Naive thymus-derived CD4-positive, alpha-beta T cell (primary cell): ENCODE measurements at regions of chr20 and their contacts with region 1.

Region 1: GRCh38 chr20:44310664-44311639 is at the start of gene FITM2:
- DNase-seq: peak; percentile 96 to 99 (median 98)
- ATAC-seq: peak; percentile 99
- H3K4me3 ChIP-seq: peak within 1 kb of the TSS; percentile 98
- H3K4me3 Mint-ChIP-seq: peak within 1 kb of the TSS; percentile 87 to 97 (median 95)
- H3K27ac ChIP-seq: peak within 1 kb of the TSS; percentile 82
- H3K27ac Mint-ChIP-seq: peak within 1 kb of the TSS; percentile 91 to 98 (median 93)
- H3K4me1 ChIP-seq: peaks cover 12 to 18% of the 10 kb centered on the region in 2 donors
- H3K4me1 Mint-ChIP-seq: peaks cover 15 to 35% (median 28%) of the 10 kb centered on the region in 7 donors
- H3K27me3 ChIP-seq: no peaks in the 10 kb centered on the region
- H3K27me3 Mint-ChIP-seq: peaks cover 0 to 8% (median 0%) of the 10 kb centered on the region in 5 donors
- total RNA-seq, gene FITM2: 3.1 to 7.9 (median 5.0) TPM

Region 2: GRCh38 chr20:43456809-43457639 is 853.9 kb before region 1 on chr20:
- CTCF ChIA-PET with region 1: no interaction called
- POLR2A ChIA-PET with region 1: no interaction called
- intact Hi-C with region 1: loop called in 1 of 2 experiments (anchors 5 kb)
- DNase-seq: peak in 7 of 9 donors; percentile 73 to 92 (median 91)
- ATAC-seq: peak; percentile 82
- H3K4me3 ChIP-seq: peak overlapping the region; percentile 86
- H3K4me3 Mint-ChIP-seq: peak overlapping the region; percentile 79 to 100 (median 94)
- H3K27ac ChIP-seq: peak overlapping the region; percentile 100
- H3K27ac Mint-ChIP-seq: peak overlapping the region; percentile 96 to 100 (median 99)
- H3K4me1 ChIP-seq: peaks cover 10 to 29% of the 10 kb centered on the region in 2 donors
- H3K4me1 Mint-ChIP-seq: peaks cover 24 to 42% (median 35%) of the 10 kb centered on the region in 7 donors
- H3K27me3 ChIP-seq: no peaks in the 10 kb centered on the region
- H3K27me3 Mint-ChIP-seq: peaks cover 0 to 14% (median 4%) of the 10 kb centered on the region in 5 donors

Region 3: DNA sequence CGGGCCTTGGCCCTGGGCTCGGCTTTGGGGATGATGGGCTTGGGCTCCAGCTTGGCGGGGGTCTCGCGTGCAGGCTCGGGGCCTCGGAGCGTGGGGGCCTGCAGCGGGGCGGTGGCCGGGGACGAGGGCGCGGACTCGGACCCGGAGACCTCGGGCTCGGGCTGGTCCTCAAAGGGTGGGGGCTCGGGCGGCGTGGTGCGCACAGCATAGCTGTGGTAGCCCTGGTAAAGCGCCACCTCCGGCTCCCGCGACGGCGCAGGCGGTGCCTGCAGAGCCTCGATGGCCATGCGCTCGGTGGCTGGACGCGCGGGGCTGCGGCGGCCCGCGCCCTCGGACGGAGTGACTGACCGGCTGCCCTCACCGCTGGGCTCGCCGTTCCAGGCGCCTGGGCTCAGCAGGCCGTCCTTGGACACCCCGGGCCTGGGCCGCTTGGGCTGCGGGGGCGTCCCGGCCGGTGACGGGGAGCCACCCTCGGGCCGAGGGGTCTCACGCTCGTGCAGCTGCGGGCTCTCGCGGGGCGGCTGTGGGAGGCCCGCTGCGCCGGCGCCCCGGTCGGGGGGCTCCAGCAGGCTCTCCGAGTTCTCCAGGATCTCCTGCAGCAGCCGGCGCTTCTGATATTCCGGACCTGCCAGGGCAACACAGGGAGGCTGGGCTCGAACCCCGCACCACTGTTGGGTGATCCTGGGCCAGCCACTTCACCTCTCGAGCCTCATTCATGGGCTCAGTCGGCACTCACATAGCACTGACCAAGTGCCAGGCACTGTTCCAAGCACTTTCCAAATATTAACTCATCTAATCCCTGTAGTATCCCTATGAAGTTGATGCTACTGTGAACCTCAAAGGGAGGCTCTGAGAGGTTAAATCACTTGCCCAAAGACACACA is 194.9 kb before region 1 on chr20:
- CTCF ChIA-PET with region 1: interaction called, 7 read pairs
- POLR2A ChIA-PET with region 1: no interaction called
- intact Hi-C with region 1: loop called (anchors 1 to 5 kb)
- DNase-seq: no peak
- ATAC-seq: no peak
- H3K4me3 ChIP-seq: no peak overlapping the region
- H3K4me3 Mint-ChIP-seq: peak overlapping the region in 1 of 10 donors; percentile 23
- H3K27ac ChIP-seq: no peak overlapping the region
- H3K27ac Mint-ChIP-seq: peak overlapping the region in 1 of 9 donors; percentile 49
- H3K4me1 ChIP-seq: no peaks in the 10 kb centered on the region
- H3K4me1 Mint-ChIP-seq: peaks cover 0 to 16% (median 5%) of the 10 kb centered on the region in 7 donors
- H3K27me3 ChIP-seq: no peaks in the 10 kb centered on the region
- H3K27me3 Mint-ChIP-seq: peaks cover 8 to 34% (median 20%) of the 10 kb centered on the region in 5 donors

Region 4: DNA sequence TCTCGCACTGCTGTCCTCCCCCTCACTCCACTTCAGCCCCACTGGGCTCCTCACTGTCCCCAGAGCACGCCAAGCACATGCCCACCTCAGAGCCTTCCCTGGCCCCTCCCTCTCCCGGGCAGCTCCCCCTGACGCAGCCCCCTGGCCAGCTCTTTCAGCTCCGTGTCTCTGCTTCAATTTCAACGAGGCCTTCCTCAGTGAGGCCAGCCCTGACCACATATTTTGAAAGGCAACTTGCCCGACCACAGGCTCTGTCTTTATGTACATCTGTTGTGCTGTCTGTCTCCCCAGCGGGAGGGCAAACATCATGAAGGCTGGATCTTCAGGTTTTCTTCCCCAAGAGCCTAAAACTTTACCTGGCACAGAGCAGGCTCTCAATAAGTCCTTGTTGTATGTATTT is 168.5 kb before region 1 on chr20:
- CTCF ChIA-PET with region 1: no interaction called
- POLR2A ChIA-PET with region 1: no interaction called
- intact Hi-C with region 1: no loop called
- DNase-seq: no peak
- ATAC-seq: no peak
- H3K4me3 ChIP-seq: no peak overlapping the region
- H3K4me3 Mint-ChIP-seq: no peak overlapping the region
- H3K27ac ChIP-seq: no peak overlapping the region
- H3K27ac Mint-ChIP-seq: no peak overlapping the region
- H3K4me1 ChIP-seq: no peaks in the 10 kb centered on the region
- H3K4me1 Mint-ChIP-seq: peaks cover 0 to 1% (median 0%) of the 10 kb centered on the region in 7 donors
- H3K27me3 ChIP-seq: no peaks in the 10 kb centered on the region
- H3K27me3 Mint-ChIP-seq: peaks cover 12 to 17% (median 13%) of the 10 kb centered on the region in 5 donors

Region 5: GRCh38 chr20:44388466-44389023 is 77.6 kb after region 1 on chr20:
- CTCF ChIA-PET with region 1: interaction called, 9 read pairs
- POLR2A ChIA-PET with region 1: no interaction called
- intact Hi-C with region 1: loop called (anchors 1 to 5 kb)
- DNase-seq: peak; percentile 30 to 70 (median 50)
- ATAC-seq: peak; percentile 91
- H3K4me3 ChIP-seq: no peak overlapping the region
- H3K4me3 Mint-ChIP-seq: peak overlapping the region in 4 of 10 donors; percentile 14 to 69 (median 38)
- H3K27ac ChIP-seq: no peak overlapping the region
- H3K27ac Mint-ChIP-seq: peak overlapping the region in 1 of 9 donors; percentile 41
- H3K4me1 ChIP-seq: no peaks in the 10 kb centered on the region
- H3K4me1 Mint-ChIP-seq: peaks cover 4 to 16% (median 8%) of the 10 kb centered on the region in 7 donors
- H3K27me3 ChIP-seq: no peaks in the 10 kb centered on the region
- H3K27me3 Mint-ChIP-seq: peaks cover 9 to 20% (median 10%) of the 10 kb centered on the region in 5 donors

Region 6: DNA sequence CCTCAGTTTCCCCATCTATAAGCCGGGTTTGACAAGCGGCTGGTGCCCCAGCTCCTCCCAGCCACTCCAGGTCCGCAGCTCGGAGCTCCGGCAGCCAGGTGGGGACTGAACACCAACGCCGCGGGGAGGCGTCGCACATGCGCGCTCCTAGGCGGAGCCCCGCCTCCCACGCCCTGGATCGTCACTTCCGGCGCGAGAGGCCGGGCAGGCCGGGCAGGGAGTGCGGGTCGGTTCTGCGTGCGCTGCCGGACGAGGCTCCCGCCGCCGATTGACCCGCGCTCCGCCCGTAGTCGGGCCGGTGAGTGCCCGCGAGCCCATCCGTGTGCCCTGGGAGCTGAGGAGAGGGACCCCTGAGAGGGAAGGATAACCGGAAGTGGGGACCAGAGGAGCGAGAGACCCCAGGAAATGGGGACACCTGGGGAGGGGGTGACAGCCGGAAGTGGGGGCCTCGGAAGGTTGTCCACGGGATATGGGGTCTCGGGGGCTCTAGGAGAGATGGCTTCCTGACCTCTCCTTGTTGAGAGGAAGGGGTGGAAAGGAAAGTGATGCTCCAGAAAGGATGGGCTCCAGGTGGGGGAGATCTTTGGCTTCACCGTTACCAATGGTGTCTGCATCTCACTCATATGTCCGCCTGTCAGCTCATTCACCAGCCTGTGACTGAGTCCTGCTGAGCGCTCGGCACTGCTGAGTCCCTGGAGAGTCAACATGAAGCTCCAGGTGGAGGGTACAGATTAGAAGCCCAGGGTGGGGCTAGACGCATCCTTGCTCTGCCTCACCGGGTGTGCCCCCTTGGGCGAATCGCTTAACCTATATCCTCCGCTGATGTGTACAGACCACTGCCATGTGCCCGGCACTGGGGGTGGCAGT is 165.0 kb after region 1 on chr20 and contains the start of gene TTPAL:
- CTCF ChIA-PET with region 1: no interaction called
- POLR2A ChIA-PET with region 1: no interaction called
- intact Hi-C with region 1: loop called in 1 of 2 experiments (anchors 5 kb)
- DNase-seq: peak; percentile 83 to 95 (median 89)
- ATAC-seq: peak; percentile 98
- H3K4me3 ChIP-seq: peak within 1 kb of the TSS; percentile 65
- H3K4me3 Mint-ChIP-seq: peak within 1 kb of the TSS; percentile 87 to 96 (median 91)
- H3K27ac ChIP-seq: peak within 1 kb of the TSS; percentile 97
- H3K27ac Mint-ChIP-seq: peak within 1 kb of the TSS; percentile 86 to 97 (median 94)
- H3K4me1 ChIP-seq: peaks cover 12 to 17% of the 10 kb centered on the region in 2 donors
- H3K4me1 Mint-ChIP-seq: peaks cover 14 to 43% (median 31%) of the 10 kb centered on the region in 7 donors
- H3K27me3 ChIP-seq: no peaks in the 10 kb centered on the region
- H3K27me3 Mint-ChIP-seq: no peaks in the 10 kb centered on the region
- total RNA-seq, gene TTPAL: 12.0 to 20.7 (median 17.0) TPM